CD8-positive, alpha-beta T cell (primary cell): ENCODE measurements at regions of chr21 and their contacts with region 1.

Region 1: GRCh38 chr21:33924079-33924765 is 8.6 kb upstream of the ATP5PO start:
- DNase-seq: peak; percentile 78 to 97 (median 90)
- ATAC-seq: peak; percentile 95
- H3K4me3 ChIP-seq: no peak overlapping the region
- H3K4me3 Mint-ChIP-seq: peak overlapping the region; percentile 5
- H3K27ac ChIP-seq: no peak overlapping the region
- H3K27ac Mint-ChIP-seq: peak overlapping the region; percentile 77
- H3K4me1 ChIP-seq: peaks cover 11% of the 10 kb centered on the region
- H3K4me1 Mint-ChIP-seq: peaks cover 11% of the 10 kb centered on the region
- H3K27me3 ChIP-seq: no peaks in the 10 kb centered on the region
- H3K27me3 Mint-ChIP-seq: no peaks in the 10 kb centered on the region
- CTCF ChIP-seq: peak; percentile 79

Region 2: GRCh38 chr21:33963848-33964555 is 39.8 kb after region 1 on chr21:
- CTCF ChIA-PET with region 1: interaction called, 21 read pairs
- POLR2A ChIA-PET with region 1: interaction called, 3 read pairs
- intact Hi-C with region 1: no loop called
- DNase-seq: peak in 1 of 9 experiments; percentile 19
- ATAC-seq: no peak
- H3K4me3 ChIP-seq: no peak overlapping the region
- H3K4me3 Mint-ChIP-seq: no peak overlapping the region
- H3K27ac ChIP-seq: no peak overlapping the region
- H3K27ac Mint-ChIP-seq: no peak overlapping the region
- H3K4me1 ChIP-seq: peaks cover 5% of the 10 kb centered on the region
- H3K4me1 Mint-ChIP-seq: peaks cover 26% of the 10 kb centered on the region
- H3K27me3 ChIP-seq: no peaks in the 10 kb centered on the region
- H3K27me3 Mint-ChIP-seq: no peaks in the 10 kb centered on the region
- CTCF ChIP-seq: no peak

Region 3: GRCh38 chr21:34020005-34020847 is 96.0 kb after region 1 on chr21:
- CTCF ChIA-PET with region 1: interaction called, 5 read pairs
- POLR2A ChIA-PET with region 1: no interaction called
- intact Hi-C with region 1: loop called in 1 of 2 experiments (anchors 5 kb)
- DNase-seq: no peak
- ATAC-seq: no peak
- H3K4me3 ChIP-seq: no peak overlapping the region
- H3K4me3 Mint-ChIP-seq: no peak overlapping the region
- H3K27ac ChIP-seq: no peak overlapping the region
- H3K27ac Mint-ChIP-seq: no peak overlapping the region
- H3K4me1 ChIP-seq: peaks cover 36% of the 10 kb centered on the region
- H3K4me1 Mint-ChIP-seq: peaks cover 25% of the 10 kb centered on the region
- H3K27me3 ChIP-seq: no peaks in the 10 kb centered on the region
- H3K27me3 Mint-ChIP-seq: no peaks in the 10 kb centered on the region
- CTCF ChIP-seq: no peak

Region 4: GRCh38 chr21:34091607-34092006 is 167.4 kb after region 1 on chr21:
- CTCF ChIA-PET with region 1: interaction called, 9 read pairs
- POLR2A ChIA-PET with region 1: no interaction called
- intact Hi-C with region 1: loop called in 1 of 2 experiments (anchors 5 kb)
- DNase-seq: peak in 2 of 9 experiments; percentile 17 to 26
- ATAC-seq: no peak
- H3K4me3 ChIP-seq: no peak overlapping the region
- H3K4me3 Mint-ChIP-seq: no peak overlapping the region
- H3K27ac ChIP-seq: no peak overlapping the region
- H3K27ac Mint-ChIP-seq: peak overlapping the region; percentile 4
- H3K4me1 ChIP-seq: peaks cover 61% of the 10 kb centered on the region
- H3K4me1 Mint-ChIP-seq: peaks cover 63% of the 10 kb centered on the region
- H3K27me3 ChIP-seq: no peaks in the 10 kb centered on the region
- H3K27me3 Mint-ChIP-seq: no peaks in the 10 kb centered on the region
- CTCF ChIP-seq: peak; percentile 47

Region 5: GRCh38 chr21:34243562-34243961 is 319.3 kb after region 1 on chr21:
- CTCF ChIA-PET with region 1: interaction called, 23 read pairs
- POLR2A ChIA-PET with region 1: no interaction called
- intact Hi-C with region 1: loop called in 1 of 2 experiments (anchors 1 kb)
- DNase-seq: peak in 2 of 9 experiments; percentile 24 to 47
- ATAC-seq: no peak
- H3K4me3 ChIP-seq: no peak overlapping the region
- H3K4me3 Mint-ChIP-seq: no peak overlapping the region
- H3K27ac ChIP-seq: no peak overlapping the region
- H3K27ac Mint-ChIP-seq: no peak overlapping the region
- H3K4me1 ChIP-seq: no peaks in the 10 kb centered on the region
- H3K4me1 Mint-ChIP-seq: no peaks in the 10 kb centered on the region
- H3K27me3 ChIP-seq: no peaks in the 10 kb centered on the region
- H3K27me3 Mint-ChIP-seq: peaks cover 3% of the 10 kb centered on the region
- CTCF ChIP-seq: no peak

Region 6: DNA sequence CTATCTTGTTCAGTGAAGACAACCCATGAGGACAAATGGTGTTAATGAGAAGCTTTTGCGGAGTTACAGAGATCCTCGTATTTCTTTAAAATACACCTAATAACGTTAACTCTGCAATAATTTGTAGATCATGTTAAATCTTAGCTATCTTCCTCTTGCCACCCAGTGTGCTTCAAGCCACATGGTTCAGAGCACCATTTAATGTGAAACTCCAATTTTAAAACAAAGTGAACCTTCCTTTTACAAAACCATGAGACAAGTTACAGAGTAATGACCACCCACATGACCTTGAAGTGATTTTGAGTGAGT is 437.9 kb after region 1 on chr21:
- CTCF ChIA-PET with region 1: interaction called, 20 read pairs
- POLR2A ChIA-PET with region 1: no interaction called
- intact Hi-C with region 1: no loop called
- DNase-seq: no peak
- ATAC-seq: peak; percentile 9
- H3K4me3 ChIP-seq: no peak overlapping the region
- H3K4me3 Mint-ChIP-seq: no peak overlapping the region
- H3K27ac ChIP-seq: no peak overlapping the region
- H3K27ac Mint-ChIP-seq: no peak overlapping the region
- H3K4me1 ChIP-seq: no peaks in the 10 kb centered on the region
- H3K4me1 Mint-ChIP-seq: peaks cover 6% of the 10 kb centered on the region
- H3K27me3 ChIP-seq: peaks cover 0 to 3% of the 10 kb centered on the region in 2 experiments
- H3K27me3 Mint-ChIP-seq: peaks cover 4% of the 10 kb centered on the region
- CTCF ChIP-seq: peak; percentile 46

Region 7: GRCh38 chr21:34745557-34746255 is 821.5 kb after region 1 on chr21:
- CTCF ChIA-PET with region 1: no interaction called
- POLR2A ChIA-PET with region 1: no interaction called
- intact Hi-C with region 1: no loop called
- DNase-seq: peak; percentile 16 to 71 (median 44)
- ATAC-seq: peak; percentile 80
- H3K4me3 ChIP-seq: peak overlapping the region in 1 of 2 experiments; percentile 13
- H3K4me3 Mint-ChIP-seq: peak overlapping the region; percentile 71
- H3K27ac ChIP-seq: no peak overlapping the region
- H3K27ac Mint-ChIP-seq: no peak overlapping the region
- H3K4me1 ChIP-seq: peaks cover 4% of the 10 kb centered on the region
- H3K4me1 Mint-ChIP-seq: peaks cover 4% of the 10 kb centered on the region
- H3K27me3 ChIP-seq: no peaks in the 10 kb centered on the region
- H3K27me3 Mint-ChIP-seq: peaks cover 4% of the 10 kb centered on the region
- CTCF ChIP-seq: peak; percentile 89